GM12878 (cell line): ENCODE measurements at regions of chrX and their contacts with region 1.

Region 1: DNA sequence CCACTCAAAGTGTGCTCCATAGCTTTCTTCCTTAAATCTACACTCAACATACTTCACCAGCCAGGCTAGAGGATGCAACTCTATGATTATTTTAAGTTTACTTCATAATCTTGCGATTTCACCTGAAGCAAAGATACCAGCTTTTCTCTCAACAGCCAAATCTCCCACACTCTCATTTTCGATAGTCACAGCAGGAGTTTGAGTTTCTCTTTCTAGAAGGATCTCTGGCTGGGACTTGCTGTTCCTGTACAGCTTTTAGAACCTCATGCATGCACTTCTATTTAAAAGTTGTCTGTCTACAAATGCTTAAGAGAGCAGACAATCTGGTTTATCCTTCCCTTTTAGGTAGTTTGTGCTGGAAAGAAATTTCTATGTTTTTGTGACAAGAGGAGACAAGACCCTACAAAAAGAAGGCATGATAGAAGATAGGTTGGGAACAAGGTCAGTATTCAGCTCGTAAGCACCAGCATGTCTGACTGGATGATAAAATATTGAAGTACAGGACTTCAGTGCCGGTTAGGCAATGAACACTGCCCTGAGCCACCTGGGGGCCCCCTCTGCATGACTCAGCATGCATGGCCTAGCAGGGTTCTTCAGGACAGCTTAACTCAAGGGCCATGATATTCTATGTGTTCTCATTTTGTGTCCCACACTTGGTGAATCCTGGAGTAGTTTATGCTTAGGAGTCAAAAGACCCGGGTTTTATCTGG is 65.6 kb downstream of the ATXN3L start:
- DNase-seq: peak; percentile 56
- ATAC-seq: peak; percentile 59
- H3K4me3 ChIP-seq: no peak overlapping the region; the same call in 1 of the 2 replicates
- H3K27ac ChIP-seq: peak overlapping the region; percentile 92
- H3K4me1 ChIP-seq: peaks cover 58% of the 10 kb centered on the region
- H3K27me3 ChIP-seq: no peaks in the 10 kb centered on the region
- CTCF ChIP-seq: peak; percentile 33 to 52 (median 41); a peak in 4 of 6 replicates
- EP300 ChIP-seq: no peak
- POLR2A ChIP-seq: no peak
- RAD21 ChIP-seq: peak; percentile 75

Region 2: GRCh38 chrX:12814420-12814819 is 439.8 kb before region 1 on chrX:
- CTCF ChIA-PET with region 1: no interaction called
- POLR2A ChIA-PET with region 1: no interaction called
- RAD21 ChIA-PET with region 1: no interaction called
- SMC1A ChIA-PET with region 1: interaction called, 10 read pairs
- in situ Hi-C with region 1: no loop called
- intact Hi-C with region 1: loop called (anchors 10 kb)
- DNase-seq: peak; percentile 59
- ATAC-seq: peak; percentile 97
- H3K4me3 ChIP-seq: no peak overlapping the region
- H3K27ac ChIP-seq: no peak overlapping the region
- H3K4me1 ChIP-seq: no peaks in the 10 kb centered on the region
- H3K27me3 ChIP-seq: no peaks in the 10 kb centered on the region
- CTCF ChIP-seq: peak; percentile 66 to 86 (median 69)
- EP300 ChIP-seq: no peak
- POLR2A ChIP-seq: no peak
- RAD21 ChIP-seq: peak; percentile 98

Region 3: DNA sequence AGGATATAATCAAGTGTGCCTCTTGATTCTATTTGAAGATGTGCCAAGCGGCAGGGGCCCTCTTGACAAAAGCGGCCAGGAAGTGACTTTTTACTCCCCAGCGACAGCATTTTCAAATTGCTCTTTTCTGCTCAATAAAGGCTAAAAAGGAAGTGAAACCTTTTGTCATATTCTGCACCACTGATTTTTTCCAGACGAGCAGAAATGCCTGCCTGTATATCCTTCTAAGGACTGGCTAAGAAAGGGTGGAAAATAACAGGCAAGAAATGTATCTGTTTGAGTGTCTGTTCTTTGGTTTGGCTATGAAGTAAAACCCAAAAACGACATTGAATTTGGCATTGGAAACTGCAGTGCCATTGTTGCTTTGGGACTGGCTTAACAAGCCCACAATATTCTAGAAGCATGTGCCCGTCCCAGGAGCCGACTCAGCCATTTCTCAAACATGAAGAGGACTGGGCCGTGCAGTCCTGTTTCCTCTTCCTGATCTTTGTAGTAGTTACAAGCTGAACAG is 253.9 kb before region 1 on chrX:
- CTCF ChIA-PET with region 1: interaction called, 3 read pairs
- POLR2A ChIA-PET with region 1: interaction called, 4 read pairs
- RAD21 ChIA-PET with region 1: interaction called, 35 read pairs
- SMC1A ChIA-PET with region 1: interaction called, 5 read pairs
- in situ Hi-C with region 1: no loop called
- intact Hi-C with region 1: no loop called
- DNase-seq: peak; percentile 90
- ATAC-seq: peak; percentile 52
- H3K4me3 ChIP-seq: peak overlapping the region; percentile 9; the same call in 1 of the 2 replicates
- H3K27ac ChIP-seq: peak overlapping the region; percentile 91
- H3K4me1 ChIP-seq: peaks cover 69% of the 10 kb centered on the region
- H3K27me3 ChIP-seq: no peaks in the 10 kb centered on the region
- CTCF ChIP-seq: no peak
- EP300 ChIP-seq: peak; percentile 73; a peak in 2 of 4 replicates
- POLR2A ChIP-seq: no peak
- RAD21 ChIP-seq: peak; percentile 10; the same call in 1 of the 2 replicates

Region 4: DNA sequence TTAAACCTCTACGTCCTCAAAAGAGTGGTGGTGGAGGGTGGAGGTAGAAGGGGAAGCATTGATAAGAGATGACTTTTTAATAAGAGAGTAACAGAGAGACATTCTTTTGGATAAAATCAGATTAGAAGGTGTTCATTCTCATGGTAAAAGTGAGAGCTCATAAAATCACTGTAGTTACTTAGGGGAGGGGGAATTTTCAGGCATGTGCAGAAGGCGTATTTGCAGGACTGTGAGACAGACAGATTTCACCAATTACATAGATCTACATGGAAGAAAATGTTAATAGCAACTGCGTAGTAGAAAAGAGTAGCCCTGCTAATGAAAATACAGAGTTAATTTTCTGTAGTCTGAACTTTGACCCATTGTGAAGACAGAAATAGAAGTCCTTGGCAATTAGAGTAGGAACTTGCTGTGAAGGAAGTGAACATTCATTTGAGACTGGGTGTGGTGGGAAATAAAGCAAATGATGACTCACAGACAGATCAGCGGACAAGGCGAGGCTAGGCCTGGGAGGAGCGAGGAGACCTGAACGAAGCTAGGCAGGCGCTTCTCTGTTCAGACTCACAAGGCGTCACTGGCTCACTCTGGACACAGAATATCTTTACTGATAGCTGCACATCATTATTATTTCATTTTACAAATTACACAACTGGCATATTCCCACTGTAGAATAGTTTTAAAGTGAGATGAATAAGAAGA is 152.6 kb before region 1 on chrX:
- CTCF ChIA-PET with region 1: interaction called, 3 read pairs
- POLR2A ChIA-PET with region 1: interaction called, 6 read pairs
- RAD21 ChIA-PET with region 1: interaction called, 242 read pairs
- SMC1A ChIA-PET with region 1: interaction called, 153 read pairs
- in situ Hi-C with region 1: no loop called
- intact Hi-C with region 1: no loop called
- DNase-seq: no peak
- ATAC-seq: peak; percentile 57
- H3K4me3 ChIP-seq: no peak overlapping the region
- H3K27ac ChIP-seq: no peak overlapping the region
- H3K4me1 ChIP-seq: no peaks in the 10 kb centered on the region
- H3K27me3 ChIP-seq: no peaks in the 10 kb centered on the region
- CTCF ChIP-seq: no peak
- EP300 ChIP-seq: no peak
- POLR2A ChIP-seq: no peak
- RAD21 ChIP-seq: no peak

Region 5: DNA sequence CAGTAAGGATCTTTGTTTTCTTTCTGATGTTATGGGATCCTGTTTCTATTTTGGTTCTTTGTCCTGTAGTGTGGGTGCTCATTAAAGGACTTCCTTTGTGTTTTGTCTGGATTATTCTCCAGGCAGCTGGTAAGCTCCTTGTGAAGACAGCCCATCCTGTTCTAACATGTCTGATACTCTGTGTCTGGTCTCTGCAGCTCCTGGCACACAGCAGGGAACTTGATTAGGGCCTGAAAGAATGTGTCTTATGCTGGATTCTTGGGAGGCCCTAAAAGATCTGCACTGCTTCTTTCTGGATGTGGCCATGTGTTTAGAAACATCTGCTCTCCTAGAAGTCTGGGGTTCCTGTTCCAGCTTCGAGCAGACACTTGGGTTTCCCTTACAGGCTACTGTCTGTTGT is 103.7 kb after region 1 on chrX:
- CTCF ChIA-PET with region 1: interaction called, 7 read pairs
- POLR2A ChIA-PET with region 1: no interaction called
- RAD21 ChIA-PET with region 1: interaction called, 6 read pairs
- SMC1A ChIA-PET with region 1: interaction called, 11 read pairs
- in situ Hi-C with region 1: no loop called
- intact Hi-C with region 1: no loop called
- DNase-seq: no peak
- ATAC-seq: no peak
- H3K4me3 ChIP-seq: no peak overlapping the region
- H3K27ac ChIP-seq: no peak overlapping the region
- H3K4me1 ChIP-seq: no peaks in the 10 kb centered on the region
- H3K27me3 ChIP-seq: no peaks in the 10 kb centered on the region
- CTCF ChIP-seq: no peak
- EP300 ChIP-seq: no peak
- POLR2A ChIP-seq: no peak
- RAD21 ChIP-seq: no peak

Region 6: DNA sequence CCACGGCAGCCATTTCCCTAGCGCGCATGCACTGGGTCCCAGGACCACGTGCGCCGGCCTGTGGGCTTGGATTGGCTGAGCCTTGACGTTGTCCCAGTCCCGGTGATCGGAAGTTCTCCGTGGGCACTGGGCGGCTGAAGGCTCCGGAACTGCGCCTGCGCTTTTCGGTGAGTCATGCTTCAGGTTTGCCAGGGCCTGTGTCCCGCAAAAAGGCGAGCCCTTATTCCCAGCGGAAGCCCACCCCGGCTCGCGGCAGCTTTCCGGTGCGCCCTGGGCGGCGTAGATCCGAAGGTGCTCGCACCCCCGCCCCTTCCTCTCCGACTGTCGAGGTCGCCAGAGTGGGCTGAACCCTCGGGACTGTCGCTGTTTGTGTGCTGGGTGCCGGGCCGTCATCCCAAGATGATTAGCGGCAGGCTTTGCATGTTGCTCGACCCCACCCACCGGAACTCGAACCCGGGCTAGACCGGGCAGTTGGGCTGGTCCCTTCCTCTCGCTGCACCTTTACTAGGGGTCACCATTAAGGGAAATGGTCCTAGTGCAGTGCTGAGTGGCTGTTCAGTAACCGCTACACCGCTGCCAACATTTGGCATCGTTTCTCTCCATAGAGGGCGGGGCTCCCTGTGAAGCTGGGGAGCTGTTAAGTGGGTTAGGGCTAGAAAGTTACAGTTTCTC is 398.9 kb after region 1 on chrX and contains the start of gene TCEANC:
- CTCF ChIA-PET with region 1: no interaction called
- POLR2A ChIA-PET with region 1: no interaction called
- RAD21 ChIA-PET with region 1: no interaction called
- SMC1A ChIA-PET with region 1: no interaction called
- in situ Hi-C with region 1: no loop called
- intact Hi-C with region 1: loop called (anchors 10 kb)
- DNase-seq: peak; percentile 89
- ATAC-seq: peak; percentile 98
- H3K4me3 ChIP-seq: peak within 1 kb of the TSS; percentile 76
- H3K27ac ChIP-seq: peak within 1 kb of the TSS; percentile 71
- H3K4me1 ChIP-seq: peaks cover 7% of the 10 kb centered on the region
- H3K27me3 ChIP-seq: no peaks in the 10 kb centered on the region
- CTCF ChIP-seq: no peak
- EP300 ChIP-seq: no peak
- POLR2A ChIP-seq: peak; percentile 85
- RAD21 ChIP-seq: no peak
- polyA plus RNA-seq, gene TCEANC: 1.5 to 4.0 TPM

Region 7: GRCh38 chrX:13885591-13885990 is 631.4 kb after region 1 on chrX:
- CTCF ChIA-PET with region 1: no interaction called
- POLR2A ChIA-PET with region 1: no interaction called
- RAD21 ChIA-PET with region 1: no interaction called
- SMC1A ChIA-PET with region 1: no interaction called
- in situ Hi-C with region 1: no loop called
- intact Hi-C with region 1: no loop called
- DNase-seq: no peak
- ATAC-seq: no peak
- H3K4me3 ChIP-seq: no peak overlapping the region
- H3K27ac ChIP-seq: no peak overlapping the region
- H3K4me1 ChIP-seq: no peaks in the 10 kb centered on the region
- H3K27me3 ChIP-seq: no peaks in the 10 kb centered on the region
- CTCF ChIP-seq: no peak
- EP300 ChIP-seq: no peak
- POLR2A ChIP-seq: no peak
- RAD21 ChIP-seq: no peak